ENCODE measurements at regions of chr11 and their contacts with region 1.

Region 1: GRCh38 chr11:34653826-34654490 is 33.1 kb downstream of the EHF start:
- DNase-seq: no peak
- H3K4me3 Mint-ChIP-seq: peak overlapping the region; percentile 19
- H3K27ac Mint-ChIP-seq: no peak overlapping the region
- H3K4me1 Mint-ChIP-seq: peaks cover 24% of the 10 kb centered on the region
- H3K27me3 Mint-ChIP-seq: peaks cover 68% of the 10 kb centered on the region

Region 2: DNA sequence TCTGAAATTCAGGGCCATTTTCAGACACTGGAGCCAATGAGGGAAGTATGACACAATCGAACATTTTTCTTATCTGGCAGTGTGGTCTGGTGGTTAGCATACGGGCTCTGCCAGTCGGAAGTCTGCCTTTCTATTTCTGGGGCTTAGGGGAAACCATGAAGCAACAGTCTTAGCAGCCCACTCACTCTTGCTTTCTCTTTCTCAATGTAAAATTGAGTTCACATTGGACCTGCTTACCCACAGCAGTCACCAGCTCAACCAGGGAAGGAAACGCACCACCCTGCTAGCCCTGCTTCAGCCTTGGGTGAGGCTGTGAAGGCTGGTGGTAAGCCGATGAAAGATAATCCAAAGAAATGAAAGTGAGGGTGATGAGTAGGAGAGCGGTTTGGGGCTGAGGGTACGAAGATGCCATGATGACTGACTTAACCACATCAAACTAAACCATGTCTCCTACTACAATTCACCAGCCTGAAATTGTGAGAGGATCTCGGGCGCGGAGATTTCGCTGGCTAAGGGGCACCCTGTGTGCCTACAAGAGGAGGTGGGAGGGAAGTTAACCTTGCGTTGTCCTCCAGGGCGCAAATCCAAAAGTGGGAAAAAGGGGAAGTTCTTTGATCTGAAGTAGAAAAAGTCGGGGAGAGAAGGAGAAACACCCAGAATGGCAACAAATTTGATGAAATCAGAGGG is 760.1 kb before region 1 on chr11:
- intact Hi-C with region 1: loop called (anchors 1 kb)
- DNase-seq: peak; percentile 83
- H3K4me3 Mint-ChIP-seq: peak overlapping the region; percentile 66
- H3K27ac Mint-ChIP-seq: peak overlapping the region; percentile 50
- H3K4me1 Mint-ChIP-seq: peaks cover 15% of the 10 kb centered on the region
- H3K27me3 Mint-ChIP-seq: peaks cover 68% of the 10 kb centered on the region

Region 3: GRCh38 chr11:34438529-34439507 is 215.1 kb before region 1 on chr11 and contains the start of gene CAT:
- intact Hi-C with region 1: loop called (anchors 1 kb)
- DNase-seq: peak; percentile 99
- H3K4me3 Mint-ChIP-seq: peak within 1 kb of the TSS; percentile 95
- H3K27ac Mint-ChIP-seq: peak within 1 kb of the TSS; percentile 90
- H3K4me1 Mint-ChIP-seq: peaks cover 17% of the 10 kb centered on the region
- H3K27me3 Mint-ChIP-seq: no peaks in the 10 kb centered on the region
- total RNA-seq, gene CAT: 17.4 and 19.0 TPM in 2 replicates

Region 4: DNA sequence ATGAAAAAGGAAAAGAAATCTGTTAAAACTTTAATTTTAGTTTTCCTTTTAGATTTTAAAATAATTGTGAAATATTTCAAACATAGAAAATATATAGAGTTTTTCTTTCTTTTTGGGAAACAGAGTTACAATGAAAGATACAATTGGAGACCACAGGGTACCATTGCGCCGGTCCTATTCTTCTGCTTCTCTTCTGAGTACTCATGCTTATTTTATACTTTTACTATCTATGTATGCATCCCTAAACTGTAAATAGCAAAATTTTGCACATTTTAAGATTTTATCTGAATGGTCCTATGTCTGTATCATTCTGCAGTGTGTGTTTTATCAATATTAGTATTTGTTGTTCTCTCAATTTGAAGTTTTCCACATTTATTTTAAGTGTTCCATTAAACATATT is 31.9 kb after region 1 on chr11:
- intact Hi-C with region 1: loop called (anchors 5 kb)
- DNase-seq: no peak
- H3K4me3 Mint-ChIP-seq: no peak overlapping the region
- H3K27ac Mint-ChIP-seq: no peak overlapping the region
- H3K4me1 Mint-ChIP-seq: no peaks in the 10 kb centered on the region
- H3K27me3 Mint-ChIP-seq: peaks cover 9% of the 10 kb centered on the region

Region 5: GRCh38 chr11:35288817-35289541 is 635.0 kb after region 1 on chr11:
- intact Hi-C with region 1: loop called (anchors 10 kb)
- DNase-seq: no peak
- H3K4me3 Mint-ChIP-seq: peak overlapping the region; percentile 19
- H3K27ac Mint-ChIP-seq: peak overlapping the region; percentile 70
- H3K4me1 Mint-ChIP-seq: peaks cover 29% of the 10 kb centered on the region
- H3K27me3 Mint-ChIP-seq: no peaks in the 10 kb centered on the region

Region 6: GRCh38 chr11:35662649-35663407 is 1008.9 kb after region 1 on chr11 and contains the start of gene TRIM44:
- intact Hi-C with region 1: loop called (anchors 5 kb)
- DNase-seq: peak; percentile 95
- H3K4me3 Mint-ChIP-seq: peak within 1 kb of the TSS; percentile 95
- H3K27ac Mint-ChIP-seq: peak within 1 kb of the TSS; percentile 93
- H3K4me1 Mint-ChIP-seq: peaks cover 32% of the 10 kb centered on the region
- H3K27me3 Mint-ChIP-seq: peaks cover 16% of the 10 kb centered on the region
- total RNA-seq, gene TRIM44: 27.3 and 27.8 TPM in 2 replicates